Activated B cell treated with CpG ODN at 0.5 μM for 24 hours (primary cell): ENCODE measurements at regions of chr5 and their contacts with region 1.

Region 1: DNA sequence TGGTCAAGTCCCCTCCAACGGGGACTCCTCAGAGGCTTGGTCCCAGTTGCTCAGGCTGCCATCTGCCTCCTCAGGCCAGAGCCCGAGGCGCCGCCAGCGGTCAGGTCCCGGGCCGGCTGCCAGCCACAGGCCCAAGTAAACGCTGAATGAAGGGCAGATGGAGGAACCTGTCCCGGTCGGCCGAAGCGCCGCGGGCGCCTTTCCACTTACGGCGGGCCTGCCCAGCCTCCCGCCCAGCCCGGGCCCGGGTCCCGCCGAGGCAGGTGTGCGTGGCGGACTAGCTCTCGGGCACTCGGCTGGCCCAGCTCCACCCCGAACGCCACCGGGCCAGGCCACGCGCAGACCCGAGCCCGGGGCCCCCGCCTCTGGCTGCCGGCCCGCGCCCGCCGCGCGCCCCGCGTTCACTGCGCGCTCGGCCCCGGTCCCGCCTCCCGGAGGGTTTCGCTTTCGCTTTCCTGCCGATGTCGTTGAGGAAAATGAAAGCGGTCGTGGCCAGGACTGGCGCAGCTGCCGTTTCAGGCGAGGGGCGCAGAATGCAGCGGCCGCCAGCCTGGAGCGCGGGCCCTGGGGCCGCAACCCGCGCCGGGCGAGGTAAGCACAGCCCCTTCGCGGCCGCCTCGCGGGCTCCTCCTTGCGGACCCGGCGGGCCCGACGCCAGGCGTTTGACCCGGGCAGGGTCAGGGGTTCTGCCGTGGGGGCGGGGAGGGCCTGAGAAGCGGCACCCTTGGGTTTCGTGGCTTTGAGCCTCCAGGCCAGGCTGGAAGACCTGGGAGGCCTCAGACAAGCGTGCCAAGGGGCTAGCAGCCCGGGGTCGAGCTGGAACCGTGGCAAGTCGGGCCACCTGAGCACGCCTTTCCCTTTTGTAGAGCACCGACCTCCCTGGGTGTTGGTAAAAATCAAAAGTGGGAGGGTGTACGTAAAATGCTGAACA is 41.2 kb downstream of the SLC22A5 start:
- DNase-seq: peak; percentile 85
- ATAC-seq: peak; percentile 86
- H3K4me3 Mint-ChIP-seq: peak overlapping the region; percentile 94
- H3K27ac Mint-ChIP-seq: peak overlapping the region; percentile 99
- H3K4me1 Mint-ChIP-seq: peaks cover 75% of the 10 kb centered on the region
- H3K27me3 Mint-ChIP-seq: no peaks in the 10 kb centered on the region
- CTCF ChIP-seq: no peak

Region 2: GRCh38 chr5:132426525-132427138 is 15.9 kb after region 1 on chr5:
- CTCF ChIA-PET with region 1: interaction called, 12 read pairs
- POLR2A ChIA-PET with region 1: interaction called, 86 read pairs
- intact Hi-C with region 1: loop called (anchors 2 kb)
- DNase-seq: peak; percentile 60
- ATAC-seq: peak; percentile 44
- H3K4me3 Mint-ChIP-seq: peak overlapping the region; percentile 62
- H3K27ac Mint-ChIP-seq: peak overlapping the region; percentile 91
- H3K4me1 Mint-ChIP-seq: peaks cover 100% of the 10 kb centered on the region
- H3K27me3 Mint-ChIP-seq: no peaks in the 10 kb centered on the region
- CTCF ChIP-seq: no peak

Region 3: DNA sequence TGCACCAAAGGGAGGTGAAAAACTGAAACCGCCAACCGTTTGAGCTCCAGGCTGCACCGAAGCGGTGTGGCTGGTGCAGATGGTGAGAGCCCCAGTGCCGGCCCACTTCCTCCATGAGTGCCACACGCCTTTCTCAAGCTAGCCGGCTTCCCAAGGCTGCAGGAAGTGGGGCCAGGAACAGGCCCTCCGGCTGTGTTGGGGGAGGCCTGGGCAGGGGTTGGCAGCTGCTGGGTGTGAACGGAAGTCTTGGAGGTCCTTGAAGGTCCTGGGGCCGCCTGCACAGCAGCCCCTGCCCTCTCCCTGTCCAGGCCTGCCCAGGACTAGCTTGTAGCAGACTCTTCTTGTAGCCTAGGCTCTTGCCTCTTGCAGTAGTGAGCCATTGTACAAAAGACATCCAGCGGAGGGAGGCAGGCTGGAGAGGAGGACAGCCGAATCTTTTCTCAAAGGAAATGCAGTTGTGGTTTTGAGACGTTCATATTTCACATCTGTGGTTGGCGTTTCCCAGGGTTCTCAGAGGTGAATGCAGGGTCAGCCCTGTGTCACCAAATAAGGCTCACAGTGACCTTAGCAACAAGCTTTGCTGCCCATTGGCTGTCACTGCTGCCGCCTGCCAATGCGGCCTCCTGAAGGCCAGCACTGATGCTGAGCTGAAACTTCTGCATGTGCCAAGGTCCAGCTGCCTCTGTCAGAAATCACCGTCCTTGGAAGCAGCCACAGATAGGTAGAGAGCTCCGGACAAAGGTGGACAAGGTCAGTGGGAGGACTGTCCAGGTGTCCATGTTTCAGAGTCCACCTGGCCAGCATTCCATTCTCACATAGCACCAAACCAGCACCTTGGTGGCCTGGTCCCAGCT is 55.9 kb after region 1 on chr5:
- CTCF ChIA-PET with region 1: interaction called, 4 read pairs
- POLR2A ChIA-PET with region 1: interaction called, 17 read pairs
- intact Hi-C with region 1: no loop called
- DNase-seq: peak; percentile 44
- ATAC-seq: peak; percentile 64
- H3K4me3 Mint-ChIP-seq: peak overlapping the region; percentile 55
- H3K27ac Mint-ChIP-seq: peak overlapping the region; percentile 54
- H3K4me1 Mint-ChIP-seq: peaks cover 92% of the 10 kb centered on the region
- H3K27me3 Mint-ChIP-seq: no peaks in the 10 kb centered on the region
- CTCF ChIP-seq: no peak

Region 4: GRCh38 chr5:132556763-132557477 is 146.2 kb after region 1 on chr5 and contains the start of gene RAD50:
- CTCF ChIA-PET with region 1: no interaction called
- POLR2A ChIA-PET with region 1: interaction called, 4 read pairs
- intact Hi-C with region 1: loop called (anchors 5 kb)
- DNase-seq: peak; percentile 89
- ATAC-seq: peak; percentile 97
- H3K4me3 Mint-ChIP-seq: peak within 1 kb of the TSS; percentile 97
- H3K27ac Mint-ChIP-seq: peak within 1 kb of the TSS; percentile 94
- H3K4me1 Mint-ChIP-seq: peaks cover 28% of the 10 kb centered on the region
- H3K27me3 Mint-ChIP-seq: no peaks in the 10 kb centered on the region
- CTCF ChIP-seq: no peak
- total RNA-seq, gene RAD50: 42.5 and 42.6 TPM in 2 replicates